Activated naive CD4-positive, alpha-beta T cell treated with anti-CD3 and anti-CD28 coated beads for 36 hours (primary cell): ENCODE measurements at regions of chr2 and their contacts with region 1.

Region 1: GRCh38 chr2:12555012-12555645 is 161.6 kb upstream of the TRIB2 start:
- DNase-seq: peak; percentile 52
- H3K4me3 Mint-ChIP-seq: peak overlapping the region; percentile 5
- H3K27ac Mint-ChIP-seq: peak overlapping the region; percentile 86
- H3K4me1 Mint-ChIP-seq: peaks cover 35% of the 10 kb centered on the region
- H3K27me3 Mint-ChIP-seq: no peaks in the 10 kb centered on the region

Region 2: GRCh38 chr2:12005886-12006681 is 549.0 kb before region 1 on chr2:
- CTCF ChIA-PET with region 1: no interaction called
- intact Hi-C with region 1: loop called (anchors 5 kb)
- DNase-seq: peak; percentile 92
- H3K4me3 Mint-ChIP-seq: no peak overlapping the region
- H3K27ac Mint-ChIP-seq: no peak overlapping the region
- H3K4me1 Mint-ChIP-seq: peaks cover 22% of the 10 kb centered on the region
- H3K27me3 Mint-ChIP-seq: peaks cover 52% of the 10 kb centered on the region

Region 3: DNA sequence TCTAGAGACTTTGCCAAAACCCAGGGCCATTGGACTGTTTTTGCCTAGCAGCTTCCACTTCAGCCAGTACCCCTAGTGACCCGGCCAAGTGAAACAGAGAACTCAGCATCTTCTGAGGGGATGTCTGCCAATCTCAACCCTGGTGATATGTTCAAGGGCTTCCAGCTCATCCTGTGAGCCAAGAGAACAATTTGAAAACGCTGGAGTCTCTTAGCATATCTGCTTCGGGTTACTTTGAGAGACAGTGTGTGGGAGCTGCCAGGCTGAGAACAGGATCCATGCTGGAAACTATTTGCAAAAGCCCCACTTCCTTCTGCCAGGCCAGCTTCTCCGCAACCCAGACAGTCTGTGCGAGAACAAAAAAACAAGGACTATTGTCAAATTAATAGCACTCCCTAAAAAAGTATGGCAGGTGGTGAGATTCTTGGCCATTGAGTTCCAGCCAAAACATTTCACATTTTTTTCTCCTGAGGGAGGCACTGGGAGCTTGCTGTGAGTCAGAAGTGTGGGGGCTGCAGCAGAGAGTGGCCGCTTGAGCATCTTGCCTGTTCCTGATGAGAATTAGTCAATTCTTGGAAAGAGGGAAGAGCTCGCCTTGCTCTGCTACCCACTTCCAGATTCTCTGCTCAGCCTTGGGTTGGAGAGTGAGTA is 234.0 kb before region 1 on chr2:
- CTCF ChIA-PET with region 1: no interaction called
- intact Hi-C with region 1: no loop called
- DNase-seq: no peak
- H3K4me3 Mint-ChIP-seq: no peak overlapping the region
- H3K27ac Mint-ChIP-seq: no peak overlapping the region
- H3K4me1 Mint-ChIP-seq: peaks cover 2% of the 10 kb centered on the region
- H3K27me3 Mint-ChIP-seq: no peaks in the 10 kb centered on the region

Region 4: GRCh38 chr2:12430407-12431133 is 124.6 kb before region 1 on chr2:
- CTCF ChIA-PET with region 1: interaction called, 3 read pairs
- intact Hi-C with region 1: loop called (anchors 5 kb)
- DNase-seq: peak; percentile 36
- H3K4me3 Mint-ChIP-seq: no peak overlapping the region
- H3K27ac Mint-ChIP-seq: no peak overlapping the region
- H3K4me1 Mint-ChIP-seq: peaks cover 30% of the 10 kb centered on the region
- H3K27me3 Mint-ChIP-seq: no peaks in the 10 kb centered on the region

Region 5: DNA sequence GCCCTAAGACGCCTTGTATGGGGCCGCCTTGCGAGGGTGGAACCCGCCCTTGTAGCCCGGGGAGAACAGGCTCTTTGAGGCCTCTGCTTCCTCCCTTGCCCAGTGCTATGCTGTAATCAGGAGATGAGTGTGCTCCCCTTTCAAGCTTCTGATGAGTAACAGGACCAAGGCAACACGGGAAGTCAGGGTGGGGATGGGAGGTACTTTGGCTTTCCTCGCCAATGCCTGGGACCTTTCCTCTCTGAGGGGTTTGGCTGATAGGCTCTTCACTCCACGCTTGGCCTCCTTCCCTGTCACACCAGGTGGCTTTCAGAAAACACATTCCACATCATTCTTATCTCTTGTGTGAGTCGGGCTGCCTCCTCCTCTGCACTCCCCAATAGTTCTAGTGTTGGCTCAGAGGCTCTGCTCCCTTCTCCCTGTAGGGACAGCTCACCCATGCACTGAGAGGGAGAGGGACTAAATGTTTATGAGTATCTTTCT is 62.1 kb before region 1 on chr2:
- CTCF ChIA-PET with region 1: interaction called, 4 read pairs
- intact Hi-C with region 1: loop called (anchors 2 kb)
- DNase-seq: peak; percentile 81
- H3K4me3 Mint-ChIP-seq: peak overlapping the region; percentile 34
- H3K27ac Mint-ChIP-seq: peak overlapping the region; percentile 85
- H3K4me1 Mint-ChIP-seq: peaks cover 61% of the 10 kb centered on the region
- H3K27me3 Mint-ChIP-seq: no peaks in the 10 kb centered on the region

Region 6: DNA sequence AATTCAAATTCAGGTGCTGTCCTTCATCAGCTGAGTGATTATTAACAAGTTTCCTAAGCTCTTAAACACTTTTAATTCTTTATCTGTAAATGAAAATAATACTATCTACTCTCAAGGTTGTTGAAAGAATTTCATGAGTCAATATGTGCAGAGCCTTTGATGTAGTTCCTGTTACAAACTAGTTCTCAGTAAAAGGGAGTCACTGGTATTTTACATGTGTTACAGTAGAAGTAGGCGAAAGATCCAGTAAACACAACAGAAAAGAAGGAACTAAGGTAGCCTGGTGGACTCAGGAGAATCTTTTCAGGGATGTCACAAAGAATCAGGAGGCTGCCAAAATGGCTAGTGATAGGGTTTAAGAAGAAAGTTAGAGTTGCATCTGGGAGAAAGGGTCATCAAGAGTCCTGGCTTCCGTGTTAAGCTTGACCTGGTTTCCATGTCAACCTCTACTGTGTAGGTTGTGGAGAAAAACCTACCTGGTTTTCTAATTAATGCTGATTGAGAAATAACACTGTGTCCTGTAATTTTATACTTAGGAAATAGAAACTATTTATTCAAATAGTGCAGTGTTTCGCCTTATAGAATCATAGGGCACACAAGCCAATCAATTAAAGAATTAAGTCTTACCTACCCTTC is 103.3 kb after region 1 on chr2:
- CTCF ChIA-PET with region 1: no interaction called
- intact Hi-C with region 1: loop called (anchors 1 kb)
- DNase-seq: no peak
- H3K4me3 Mint-ChIP-seq: no peak overlapping the region
- H3K27ac Mint-ChIP-seq: peak overlapping the region; percentile 59
- H3K4me1 Mint-ChIP-seq: peaks cover 15% of the 10 kb centered on the region
- H3K27me3 Mint-ChIP-seq: no peaks in the 10 kb centered on the region

Region 7: GRCh38 chr2:12931186-12931844 is 376.2 kb after region 1 on chr2:
- CTCF ChIA-PET with region 1: interaction called, 4 read pairs
- intact Hi-C with region 1: loop called (anchors 5 kb)
- DNase-seq: no peak
- H3K4me3 Mint-ChIP-seq: no peak overlapping the region
- H3K27ac Mint-ChIP-seq: no peak overlapping the region
- H3K4me1 Mint-ChIP-seq: peaks cover 8% of the 10 kb centered on the region
- H3K27me3 Mint-ChIP-seq: peaks cover 2% of the 10 kb centered on the region